AG04450 (cell line): ENCODE measurements at regions of chr2 and their contacts with region 1.

Region 1: GRCh38 chr2:75047992-75048625 is 89.7 kb downstream of the POLE4 start:
- DNase-seq: no peak
- H3K4me3 ChIP-seq: no peak overlapping the region
- H3K27ac ChIP-seq: no peak overlapping the region
- H3K27me3 ChIP-seq: no peaks in the 10 kb centered on the region
- CTCF ChIP-seq: no peak

Region 2: DNA sequence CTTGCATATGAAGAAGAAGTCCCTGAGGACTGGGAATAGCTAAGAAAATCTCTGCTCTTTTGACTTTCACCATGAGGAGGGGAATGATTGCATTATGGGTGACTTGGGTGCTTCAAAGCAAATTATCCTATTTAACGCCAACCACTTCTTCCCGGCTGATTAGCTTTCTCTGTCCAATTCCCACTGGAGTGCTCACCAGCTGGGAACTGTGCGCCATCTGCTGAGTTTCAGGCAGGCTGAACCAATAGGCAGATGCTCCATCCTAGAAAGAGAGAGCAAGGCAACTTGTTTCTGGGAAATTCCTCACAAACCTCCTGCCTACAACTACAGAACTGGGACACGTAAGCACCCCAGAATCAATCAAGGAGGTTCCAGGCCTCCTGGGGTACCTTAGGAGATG is 40.3 kb before region 1 on chr2:
- CTCF ChIA-PET with region 1: no interaction called
- POLR2A ChIA-PET with region 1: no interaction called
- DNase-seq: no peak
- H3K4me3 ChIP-seq: no peak overlapping the region
- H3K27ac ChIP-seq: no peak overlapping the region
- H3K27me3 ChIP-seq: no peaks in the 10 kb centered on the region
- CTCF ChIP-seq: no peak

Region 3: DNA sequence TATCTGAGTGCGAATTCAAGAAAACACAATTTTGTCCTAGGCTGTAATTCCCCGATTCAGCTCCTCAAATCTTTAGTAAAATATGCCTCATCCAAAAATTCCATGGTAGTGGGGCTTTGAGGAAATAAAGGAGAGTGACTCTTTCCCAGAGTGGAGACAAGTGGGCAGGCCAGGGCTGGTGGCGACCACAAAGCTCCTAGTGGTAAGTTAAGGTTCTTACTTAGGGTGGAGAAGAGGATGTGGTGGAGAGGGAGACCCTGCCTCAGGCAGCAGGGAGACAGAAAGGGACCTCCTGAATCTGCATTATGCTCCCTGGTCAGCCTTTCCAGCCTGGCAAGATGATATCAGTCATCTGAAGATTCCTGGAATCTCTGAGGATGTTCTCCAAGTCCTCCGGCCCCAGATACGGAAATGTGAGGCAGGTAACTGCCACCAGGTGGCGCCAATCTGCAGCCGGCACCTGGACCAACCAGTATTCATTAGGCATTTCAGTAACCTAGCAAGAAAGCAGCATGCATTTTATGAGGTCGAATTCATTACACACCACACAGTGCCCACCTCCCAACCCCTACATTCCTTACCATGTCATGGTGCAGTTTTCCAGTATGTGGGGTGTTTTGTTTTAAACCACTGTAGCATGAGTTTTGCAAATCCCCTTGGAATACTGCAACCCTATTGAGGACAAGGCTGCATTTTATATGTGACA is 16.7 kb after region 1 on chr2:
- CTCF ChIA-PET with region 1: interaction called, 14 read pairs
- POLR2A ChIA-PET with region 1: no interaction called
- DNase-seq: no peak
- H3K4me3 ChIP-seq: no peak overlapping the region; the same call in 1 of the 2 replicates
- H3K27ac ChIP-seq: no peak overlapping the region
- H3K27me3 ChIP-seq: no peaks in the 10 kb centered on the region
- CTCF ChIP-seq: peak; percentile 84